ENCODE measurements at regions of chr17 and their contacts with region 1.

Region 1: DNA sequence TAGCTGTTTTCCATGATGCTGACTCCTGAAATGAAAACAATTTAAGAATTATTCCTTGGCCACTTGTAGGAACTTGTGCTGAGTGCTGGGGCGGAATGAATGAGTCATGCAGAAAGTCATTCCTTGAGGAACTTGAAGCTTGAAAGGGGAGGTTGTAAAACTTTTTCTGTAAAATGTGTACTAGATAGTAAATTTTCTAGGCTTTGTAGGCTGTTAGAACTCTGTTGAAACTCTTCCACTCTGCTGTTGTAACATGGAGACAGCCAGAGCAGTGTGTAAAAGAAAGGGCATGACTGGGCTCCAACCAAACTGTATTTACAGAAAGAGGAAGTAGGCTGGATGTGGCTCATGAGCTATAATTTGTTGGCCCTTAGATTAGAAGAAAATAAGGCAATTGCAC is 46.1 kb downstream of the ABCA8 start:
- DNase-seq: peak; percentile 53
- ATAC-seq: peak; percentile 56 to 85

Region 2: GRCh38 chr17:68771867-68772515 is 137.1 kb before region 1 on chr17:
- intact Hi-C with region 1: loop called in 1 of 2 experiments (anchors 10 kb)
- DNase-seq: no peak
- ATAC-seq: peak; percentile 81 to 90

Region 3: DNA sequence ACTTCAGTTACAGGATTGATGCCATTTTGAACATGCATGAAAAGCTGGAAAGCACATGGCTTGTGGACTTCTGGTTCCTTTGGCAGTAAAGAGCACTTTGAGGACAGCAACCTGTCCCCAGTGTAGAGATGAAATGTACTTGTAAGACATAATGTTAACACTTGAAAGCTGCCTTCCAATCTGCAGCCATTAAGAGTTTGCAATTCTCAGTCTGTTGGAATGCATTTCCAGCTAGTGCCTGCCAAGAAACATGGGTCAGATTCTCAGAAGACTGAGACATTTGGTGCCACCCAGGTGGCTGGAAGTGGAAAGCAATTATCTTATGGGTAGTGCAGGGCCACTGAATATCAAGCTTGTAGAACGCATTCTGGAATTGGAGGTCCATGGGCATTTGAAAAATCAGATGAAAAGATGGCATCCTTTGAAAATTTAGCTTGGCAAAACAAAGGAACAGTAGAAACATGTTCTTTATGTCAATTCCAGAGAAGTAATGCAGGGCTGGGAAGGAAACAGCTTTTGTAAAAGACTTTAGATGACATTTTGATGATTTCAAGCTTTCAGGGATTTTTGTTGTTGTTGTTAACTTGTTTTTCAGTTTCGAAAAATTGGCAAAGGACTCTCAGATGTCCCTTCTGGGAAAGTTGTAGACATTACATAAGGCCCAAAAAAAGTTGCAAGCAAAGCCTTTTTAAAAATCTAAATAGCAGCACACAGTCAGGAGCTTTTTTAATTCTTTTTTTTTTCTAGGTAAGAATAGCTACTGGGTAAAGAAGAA is 100.9 kb before region 1 on chr17:
- intact Hi-C with region 1: no loop called
- DNase-seq: no peak
- ATAC-seq: peak; percentile 38 to 53

Region 4: GRCh38 chr17:69170377-69170776 is 261.3 kb after region 1 on chr17:
- intact Hi-C with region 1: no loop called
- DNase-seq: no peak
- ATAC-seq: peak in 1 of 2 donors; percentile 34

Measured in left cardiac atrium (tissue), 4 donors.